ENCODE measurements at regions of chr20 and their contacts with region 1.

Region 1: GRCh38 chr20:6347916-6348315 is 225.1 kb upstream of the FERMT1 start:
- DNase-seq: no peak
- H3K4me3 Mint-ChIP-seq: no peak overlapping the region
- H3K27ac Mint-ChIP-seq: no peak overlapping the region
- H3K4me1 Mint-ChIP-seq: no peaks in the 10 kb centered on the region
- H3K27me3 Mint-ChIP-seq: no peaks in the 10 kb centered on the region

Region 2: DNA sequence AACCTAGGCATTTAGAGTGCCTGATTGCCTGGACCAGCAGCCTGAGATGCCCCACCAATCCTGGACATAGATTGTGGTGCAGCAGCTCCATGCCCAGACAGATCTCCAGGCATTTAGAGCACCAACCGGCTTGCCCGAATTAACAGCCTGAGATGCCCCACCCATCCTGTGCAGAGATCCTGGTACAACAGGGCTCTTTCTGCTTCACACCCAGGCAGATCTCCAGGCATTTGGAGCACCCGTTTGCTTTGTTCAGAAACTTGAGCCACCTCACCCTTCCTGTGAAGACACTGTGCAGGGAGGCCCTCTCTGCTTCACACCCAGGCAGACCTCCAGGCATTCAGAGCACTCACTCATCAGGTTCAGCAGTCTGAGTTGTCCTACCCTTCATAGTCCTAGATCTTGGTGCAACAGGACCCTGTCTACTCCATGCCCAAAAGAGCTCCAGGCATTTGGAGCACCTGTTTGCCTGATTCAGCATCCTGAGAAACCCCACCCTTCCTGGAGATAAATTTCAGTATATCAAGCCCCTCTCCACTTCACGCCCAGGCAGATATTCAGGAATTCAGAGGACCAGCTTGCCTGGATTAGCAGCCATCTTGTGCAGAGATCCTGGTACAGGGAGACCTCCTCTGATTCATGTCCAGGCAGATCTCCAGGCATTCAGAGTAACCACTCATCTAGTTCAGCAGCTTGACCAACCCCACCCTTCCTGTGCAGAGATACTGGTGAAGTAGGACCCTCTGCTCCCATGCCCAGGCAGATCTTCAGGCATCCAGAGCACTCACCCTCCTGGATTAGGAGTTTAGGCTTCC is 35.9 kb before region 1 on chr20:
- CTCF ChIA-PET with region 1: no interaction called
- POLR2A ChIA-PET with region 1: no interaction called
- intact Hi-C with region 1: no loop called
- DNase-seq: no peak
- H3K4me3 Mint-ChIP-seq: no peak overlapping the region
- H3K27ac Mint-ChIP-seq: no peak overlapping the region
- H3K4me1 Mint-ChIP-seq: no peaks in the 10 kb centered on the region
- H3K27me3 Mint-ChIP-seq: no peaks in the 10 kb centered on the region

Region 3: DNA sequence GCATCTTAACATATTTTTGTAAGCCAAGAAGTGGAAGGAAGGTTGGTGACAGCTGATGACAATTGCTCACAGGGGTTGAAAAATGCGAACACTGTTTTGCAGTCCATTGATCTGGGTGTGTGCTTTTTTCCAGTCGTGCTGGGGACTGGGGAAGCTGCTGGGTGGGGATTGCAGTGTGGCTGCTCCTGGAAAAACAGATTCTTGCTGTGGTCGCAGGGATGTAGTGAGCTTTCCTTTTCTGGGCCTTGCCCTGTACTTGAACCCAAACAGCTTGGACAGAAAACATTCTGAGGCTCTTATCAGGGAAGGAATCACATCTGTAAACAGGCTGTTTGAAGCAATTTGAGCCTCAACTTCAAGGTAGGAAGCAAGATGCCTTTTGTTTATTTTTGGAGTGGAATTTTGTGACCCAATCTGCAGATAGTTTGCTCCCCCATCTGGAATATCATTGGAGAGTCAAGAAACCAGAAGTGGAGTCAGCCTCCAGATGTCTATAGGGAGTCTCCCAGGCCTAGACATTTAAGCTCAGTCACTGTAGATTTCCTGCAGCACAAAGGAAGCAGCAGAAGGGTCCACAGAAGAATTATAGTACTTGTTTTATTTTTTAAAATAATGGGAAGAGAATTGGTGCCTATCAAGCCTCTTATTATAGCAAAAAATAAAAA is 54.1 kb after region 1 on chr20:
- CTCF ChIA-PET with region 1: no interaction called
- POLR2A ChIA-PET with region 1: no interaction called
- intact Hi-C with region 1: loop called (anchors 10 kb)
- DNase-seq: no peak
- H3K4me3 Mint-ChIP-seq: no peak overlapping the region
- H3K27ac Mint-ChIP-seq: no peak overlapping the region
- H3K4me1 Mint-ChIP-seq: no peaks in the 10 kb centered on the region
- H3K27me3 Mint-ChIP-seq: no peaks in the 10 kb centered on the region